Natural killer cell (primary cell): ENCODE measurements at regions of chr3 and their contacts with region 1.

Region 1: DNA sequence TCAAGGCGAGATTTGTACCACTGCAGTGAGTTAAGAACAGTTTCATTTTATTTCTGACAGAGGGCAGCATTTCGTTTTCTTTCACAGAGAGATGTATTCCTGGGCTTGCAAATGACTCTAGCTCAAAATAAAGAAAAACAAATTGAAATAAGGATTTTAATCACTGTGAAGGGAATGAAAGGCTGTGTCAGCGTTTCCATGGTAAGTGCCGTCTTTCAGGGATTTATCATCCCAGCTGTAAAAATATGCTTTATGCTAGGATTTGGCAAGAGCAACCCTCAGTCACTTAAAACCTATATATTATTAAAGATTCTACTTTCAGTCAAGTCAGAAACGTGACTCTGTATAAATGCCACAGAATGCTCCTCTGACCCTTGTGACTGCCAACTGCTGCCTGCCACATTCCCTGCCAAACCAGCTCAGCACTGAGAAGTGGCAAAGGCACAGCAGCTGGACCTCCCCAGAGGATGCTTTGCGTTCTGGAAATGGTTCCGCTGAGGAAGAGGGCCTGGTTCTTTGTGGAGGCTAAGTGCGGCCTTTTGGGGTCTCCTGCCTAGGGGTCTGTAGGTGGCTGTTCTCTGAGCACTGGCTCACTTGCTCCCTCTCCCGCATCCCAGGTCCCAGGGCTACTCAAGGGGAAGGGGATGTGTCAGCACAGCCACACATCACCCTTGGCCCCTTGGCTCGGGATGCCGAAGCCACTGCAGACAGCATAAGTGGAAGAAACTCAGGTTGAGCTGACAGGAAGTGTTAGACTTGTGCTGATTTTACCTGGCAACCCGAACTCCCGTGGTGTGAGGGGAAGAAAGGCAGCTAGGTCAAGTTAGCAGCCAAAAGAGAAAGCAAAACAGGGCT is 56.6 kb upstream of the POMGNT2 start:
- DNase-seq: peak in 1 of 2 donors; percentile 82
- ATAC-seq: peak; percentile 78 to 81 (median 80)
- H3K4me3 ChIP-seq: no peak overlapping the region
- H3K4me3 Mint-ChIP-seq: peak overlapping the region; percentile 83
- H3K27ac ChIP-seq: peak overlapping the region; percentile 53
- H3K27ac Mint-ChIP-seq: peak overlapping the region; percentile 87 to 93
- H3K4me1 ChIP-seq: peaks cover 21% of the 10 kb centered on the region
- H3K4me1 Mint-ChIP-seq: peaks cover 20 to 22% of the 10 kb centered on the region in 2 donors
- H3K27me3 ChIP-seq: no peaks in the 10 kb centered on the region
- H3K27me3 Mint-ChIP-seq: no peaks in the 10 kb centered on the region
- CTCF ChIP-seq: peak; percentile 62

Region 2: GRCh38 chr3:43378066-43378935 is 215.8 kb after region 1 on chr3:
- intact Hi-C with region 1: loop called (anchors 1 kb)
- DNase-seq: peak; percentile 52 to 88
- ATAC-seq: peak; percentile 79 to 91 (median 90)
- H3K4me3 ChIP-seq: no peak overlapping the region
- H3K4me3 Mint-ChIP-seq: no peak overlapping the region
- H3K27ac ChIP-seq: no peak overlapping the region
- H3K27ac Mint-ChIP-seq: peak overlapping the region; percentile 15 to 66
- H3K4me1 ChIP-seq: peaks cover 13% of the 10 kb centered on the region
- H3K4me1 Mint-ChIP-seq: peaks cover 18 to 23% of the 10 kb centered on the region in 2 donors
- H3K27me3 ChIP-seq: no peaks in the 10 kb centered on the region
- H3K27me3 Mint-ChIP-seq: no peaks in the 10 kb centered on the region
- CTCF ChIP-seq: peak; percentile 86

Region 3: DNA sequence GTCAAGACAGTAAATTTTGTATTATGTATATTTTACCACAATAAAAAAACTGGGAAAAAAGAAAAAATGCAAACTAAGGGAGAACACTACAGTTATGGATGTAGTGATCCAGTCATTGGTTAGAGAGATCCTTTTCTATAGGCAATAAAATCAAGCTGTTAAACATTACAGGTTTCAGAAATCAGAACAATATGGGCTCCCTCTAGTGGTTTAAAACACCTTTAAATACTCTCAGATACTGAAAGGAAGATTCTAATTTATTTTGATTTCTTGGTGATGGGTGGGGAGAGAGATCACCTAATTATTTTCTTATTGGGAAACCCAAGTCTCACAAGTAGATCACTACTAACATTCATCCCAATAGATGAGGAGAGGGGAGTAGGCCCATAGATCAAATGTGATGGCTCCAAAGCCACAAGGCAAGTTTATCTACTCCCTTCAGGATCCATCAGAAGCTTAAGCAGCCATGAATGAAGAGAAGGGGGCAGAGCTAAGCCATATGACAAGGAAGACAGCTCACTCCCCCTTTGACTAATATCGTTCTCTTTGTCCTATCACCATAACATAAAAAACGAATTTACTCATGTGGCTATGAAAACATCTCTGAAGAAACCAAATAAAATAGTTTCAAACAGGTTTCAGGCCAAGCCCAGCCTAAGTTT is 340.7 kb after region 1 on chr3:
- intact Hi-C with region 1: loop called (anchors 1 kb)
- DNase-seq: peak in 1 of 2 donors; percentile 70
- ATAC-seq: peak; percentile 60 to 81 (median 77)
- H3K4me3 ChIP-seq: no peak overlapping the region
- H3K4me3 Mint-ChIP-seq: peak overlapping the region; percentile 10
- H3K27ac ChIP-seq: no peak overlapping the region
- H3K27ac Mint-ChIP-seq: peak overlapping the region; percentile 62 to 67
- H3K4me1 ChIP-seq: peaks cover 13% of the 10 kb centered on the region
- H3K4me1 Mint-ChIP-seq: peaks cover 47 to 48% of the 10 kb centered on the region in 2 donors
- H3K27me3 ChIP-seq: no peaks in the 10 kb centered on the region
- H3K27me3 Mint-ChIP-seq: no peaks in the 10 kb centered on the region
- CTCF ChIP-seq: peak; percentile 85

Region 4: GRCh38 chr3:44685128-44685800 is 1522.8 kb after region 1 on chr3:
- intact Hi-C with region 1: no loop called
- DNase-seq: peak; percentile 61 to 68
- ATAC-seq: peak; percentile 75 to 91 (median 83)
- H3K4me3 ChIP-seq: peak overlapping the region; percentile 41
- H3K4me3 Mint-ChIP-seq: peak overlapping the region; percentile 85
- H3K27ac ChIP-seq: peak overlapping the region; percentile 5
- H3K27ac Mint-ChIP-seq: peak overlapping the region; percentile 76 to 86
- H3K4me1 ChIP-seq: peaks cover 9% of the 10 kb centered on the region
- H3K4me1 Mint-ChIP-seq: peaks cover 18 to 21% of the 10 kb centered on the region in 2 donors
- H3K27me3 ChIP-seq: no peaks in the 10 kb centered on the region
- H3K27me3 Mint-ChIP-seq: peaks cover 16 to 25% of the 10 kb centered on the region in 2 donors
- CTCF ChIP-seq: no peak